ENCODE measurements at regions of chr10 and their contacts with region 1.

Region 1: DNA sequence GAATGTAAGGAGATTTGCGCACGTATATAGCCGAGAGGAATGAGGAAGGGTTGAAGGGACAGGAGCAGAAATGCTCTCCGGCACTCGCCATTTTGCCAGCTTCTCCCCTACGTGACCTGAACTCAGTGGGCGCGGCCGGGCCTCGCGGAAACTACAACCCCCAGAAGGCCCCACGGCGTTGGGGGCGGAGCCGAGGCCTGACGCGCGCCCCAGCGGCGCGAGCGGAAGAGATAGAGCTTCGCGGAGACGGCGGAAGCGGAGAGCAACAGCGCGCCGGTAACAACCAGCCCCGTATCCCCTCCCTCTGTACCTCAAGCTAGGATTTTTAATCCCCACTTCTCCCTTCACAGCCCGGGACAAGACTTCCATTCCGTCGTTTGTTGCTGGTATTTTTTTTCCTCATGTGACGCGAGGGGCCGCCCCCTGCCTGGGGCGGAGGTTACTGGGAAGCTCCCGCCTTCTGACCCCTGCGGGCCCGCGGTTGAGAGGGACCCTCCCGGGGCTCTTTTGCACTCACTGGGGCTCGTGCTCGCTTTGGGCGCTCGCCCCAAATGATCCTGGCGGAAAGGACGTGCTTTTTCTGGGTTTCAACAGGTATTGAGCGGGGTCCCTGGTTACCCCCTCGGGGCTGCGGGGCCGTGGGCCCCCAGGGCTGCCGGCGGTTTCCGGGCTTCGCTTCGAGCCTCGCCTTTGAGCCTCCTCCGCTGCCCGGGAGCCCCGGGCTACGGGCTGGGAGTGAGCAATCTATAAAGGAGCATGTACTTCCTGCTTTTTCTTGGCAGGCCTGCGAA is at the start of gene R3HCC1L:
- DNase-seq: peak; percentile 97
- H3K4me3 ChIP-seq: peak within 1 kb of the TSS; percentile 90
- H3K27ac ChIP-seq: peak within 1 kb of the TSS; percentile 92
- H3K4me1 ChIP-seq: peaks cover 59% of the 10 kb centered on the region
- CTCF ChIP-seq: no peak
- total RNA-seq, gene R3HCC1L: 42.0 and 48.5 TPM in 2 replicates

Region 2: GRCh38 chr10:98163941-98164340 is 29.3 kb after region 1 on chr10:
- CTCF ChIA-PET with region 1: interaction called, 17 read pairs
- POLR2A ChIA-PET with region 1: interaction called, 171 read pairs
- intact Hi-C with region 1: loop called (anchors 1 kb)
- DNase-seq: peak; percentile 46
- H3K4me3 ChIP-seq: peak overlapping the region; percentile 53
- H3K27ac ChIP-seq: peak overlapping the region; percentile 100
- H3K4me1 ChIP-seq: peaks cover 96% of the 10 kb centered on the region
- CTCF ChIP-seq: no peak

Region 3: GRCh38 chr10:98186681-98187080 is 52.1 kb after region 1 on chr10:
- CTCF ChIA-PET with region 1: no interaction called
- POLR2A ChIA-PET with region 1: no interaction called
- intact Hi-C with region 1: no loop called
- DNase-seq: no peak
- H3K4me3 ChIP-seq: no peak overlapping the region
- H3K27ac ChIP-seq: no peak overlapping the region
- H3K4me1 ChIP-seq: no peaks in the 10 kb centered on the region
- CTCF ChIP-seq: no peak